ENCODE measurements at regions of chrX and their contacts with region 1.

Region 1: GRCh38 chrX:44705817-44706551 is 137.8 kb upstream of the DUSP21 start:
- DNase-seq: no peak
- ATAC-seq: no peak
- H3K4me3 ChIP-seq: no peak overlapping the region
- H3K27ac ChIP-seq: no peak overlapping the region
- H3K4me1 ChIP-seq: no peaks in the 10 kb centered on the region
- H3K27me3 ChIP-seq: no peaks in the 10 kb centered on the region
- CTCF ChIP-seq: no peak

Region 2: GRCh38 chrX:44570522-44570921 is 135.5 kb before region 1 on chrX:
- CTCF ChIA-PET with region 1: no interaction called
- POLR2A ChIA-PET with region 1: no interaction called
- intact Hi-C with region 1: no loop called
- DNase-seq: peak; percentile 51
- ATAC-seq: peak; percentile 66
- H3K4me3 ChIP-seq: no peak overlapping the region
- H3K27ac ChIP-seq: peak overlapping the region; percentile 25
- H3K4me1 ChIP-seq: peaks cover 8% of the 10 kb centered on the region; the same call in 1 of the 2 replicates
- H3K27me3 ChIP-seq: no peaks in the 10 kb centered on the region
- CTCF ChIP-seq: no peak

Region 3: DNA sequence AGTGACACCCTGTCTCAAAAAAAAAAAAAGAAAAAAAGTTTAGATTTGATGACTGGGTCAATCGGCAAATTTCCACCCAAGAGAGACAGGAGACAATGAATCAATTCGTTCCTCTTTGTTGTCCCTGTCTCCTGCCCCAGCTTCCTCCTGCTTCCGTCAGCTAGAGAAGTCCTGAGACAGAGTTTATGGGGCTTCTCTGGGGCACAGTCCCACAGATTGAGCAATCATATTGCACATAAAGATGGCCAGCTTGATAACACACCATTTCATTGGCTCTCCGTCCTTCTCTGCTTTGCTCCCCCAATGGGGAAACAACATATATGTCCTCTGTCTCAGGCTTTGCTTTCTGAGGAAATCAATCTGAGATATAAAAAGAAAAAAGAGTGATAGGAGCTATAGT is 84.9 kb before region 1 on chrX:
- CTCF ChIA-PET with region 1: no interaction called
- POLR2A ChIA-PET with region 1: no interaction called
- intact Hi-C with region 1: no loop called
- DNase-seq: no peak
- ATAC-seq: no peak
- H3K4me3 ChIP-seq: no peak overlapping the region
- H3K27ac ChIP-seq: no peak overlapping the region
- H3K4me1 ChIP-seq: no peaks in the 10 kb centered on the region
- H3K27me3 ChIP-seq: no peaks in the 10 kb centered on the region
- CTCF ChIP-seq: no peak

Region 4: DNA sequence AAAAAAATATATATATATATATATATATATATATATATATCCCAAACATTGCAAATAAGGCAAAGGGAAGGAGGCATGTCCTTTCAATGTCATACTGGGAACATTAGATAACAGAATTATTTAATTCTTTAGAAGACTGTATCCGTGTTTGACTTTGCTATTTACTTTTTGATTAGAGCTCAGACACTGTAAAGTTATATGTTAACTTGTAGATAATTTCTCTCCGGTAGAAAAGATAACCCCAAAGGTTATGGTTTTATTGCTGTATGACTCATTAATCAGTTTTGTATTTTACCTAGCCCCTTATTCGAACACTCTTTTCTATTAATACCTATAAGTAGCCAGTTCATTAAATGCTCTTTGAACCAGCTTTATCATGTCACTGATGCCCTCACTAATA is 12.7 kb before region 1 on chrX:
- CTCF ChIA-PET with region 1: no interaction called
- POLR2A ChIA-PET with region 1: interaction called, 10 read pairs
- intact Hi-C with region 1: no loop called
- DNase-seq: no peak
- ATAC-seq: no peak
- H3K4me3 ChIP-seq: no peak overlapping the region
- H3K27ac ChIP-seq: no peak overlapping the region
- H3K4me1 ChIP-seq: no peaks in the 10 kb centered on the region
- H3K27me3 ChIP-seq: no peaks in the 10 kb centered on the region
- CTCF ChIP-seq: no peak

Measured in PC-3 (cell line).